ENCODE measurements at regions of chr12 and their contacts with region 1.

Region 1: GRCh38 chr12:57836442-57837375 is 9.8 kb downstream of the CTDSP2 start:
- DNase-seq: no peak
- ATAC-seq: no peak
- H3K4me3 ChIP-seq: no peak overlapping the region
- H3K27ac ChIP-seq: no peak overlapping the region
- H3K4me1 ChIP-seq: peaks cover 87% of the 10 kb centered on the region
- H3K27me3 ChIP-seq: no peaks in the 10 kb centered on the region
- CTCF ChIP-seq: no peak
- EP300 ChIP-seq: no peak
- POLR2A ChIP-seq: no peak
- RAD21 ChIP-seq: no peak

Region 2: GRCh38 chr12:57355734-57356133 is 481.0 kb before region 1 on chr12:
- CTCF ChIA-PET with region 1: no interaction called
- POLR2A ChIA-PET with region 1: no interaction called
- in situ Hi-C with region 1: no loop called
- intact Hi-C with region 1: no loop called
- DNase-seq: no peak
- ATAC-seq: no peak
- H3K4me3 ChIP-seq: no peak overlapping the region
- H3K27ac ChIP-seq: no peak overlapping the region
- H3K4me1 ChIP-seq: no peaks in the 10 kb centered on the region
- H3K27me3 ChIP-seq: no peaks in the 10 kb centered on the region
- CTCF ChIP-seq: no peak
- EP300 ChIP-seq: no peak
- POLR2A ChIP-seq: no peak
- RAD21 ChIP-seq: no peak

Region 3: GRCh38 chr12:57803319-57803893 is 33.3 kb before region 1 on chr12:
- CTCF ChIA-PET with region 1: no interaction called
- POLR2A ChIA-PET with region 1: no interaction called
- in situ Hi-C with region 1: no loop called
- intact Hi-C with region 1: loop called (anchors 1 kb)
- DNase-seq: peak; percentile 23
- ATAC-seq: peak; percentile 89
- H3K4me3 ChIP-seq: no peak overlapping the region
- H3K27ac ChIP-seq: no peak overlapping the region
- H3K4me1 ChIP-seq: no peaks in the 10 kb centered on the region
- H3K27me3 ChIP-seq: no peaks in the 10 kb centered on the region
- CTCF ChIP-seq: peak; percentile 80
- EP300 ChIP-seq: no peak
- POLR2A ChIP-seq: no peak
- RAD21 ChIP-seq: peak; percentile 54